B cell (primary cell): ENCODE measurements at regions of chr16 and their contacts with region 1.

Region 1: GRCh38 chr16:65671-66137 is 6.7 kb downstream of the RHBDF1 start:
- DNase-seq: peak; percentile 87
- ATAC-seq: peak; percentile 94
- H3K4me3 ChIP-seq: no peak overlapping the region
- H3K4me3 Mint-ChIP-seq: no peak overlapping the region
- H3K27ac ChIP-seq: no peak overlapping the region
- H3K27ac Mint-ChIP-seq: peak overlapping the region; percentile 56
- H3K4me1 ChIP-seq: peaks cover 0 to 8% of the 10 kb centered on the region in 2 donors
- H3K4me1 Mint-ChIP-seq: peaks cover 7% of the 10 kb centered on the region
- H3K27me3 ChIP-seq: peaks cover 0 to 15% (median 3%) of the 10 kb centered on the region in 4 experiments
- H3K27me3 Mint-ChIP-seq: peaks cover 6% of the 10 kb centered on the region
- CTCF ChIP-seq: peak; percentile 96

Region 2: GRCh38 chr16:53346-54236 is 12.1 kb before region 1 on chr16 and contains the starts of genes POLR3K and SNRNP25:
- CTCF ChIA-PET with region 1: interaction called, 24 read pairs
- POLR2A ChIA-PET with region 1: interaction called, 3 read pairs
- intact Hi-C with region 1: no loop called
- DNase-seq: peak; percentile 97
- ATAC-seq: peak; percentile 95
- H3K4me3 ChIP-seq: peak within 1 kb of the TSS; percentile 69 to 87 (median 82)
- H3K4me3 Mint-ChIP-seq: peak within 1 kb of the TSS; percentile 97
- H3K27ac ChIP-seq: peak within 1 kb of the TSS; percentile 52 to 82
- H3K27ac Mint-ChIP-seq: peak within 1 kb of the TSS; percentile 92
- H3K4me1 ChIP-seq: peaks cover 13 to 33% of the 10 kb centered on the region in 2 donors
- H3K4me1 Mint-ChIP-seq: peaks cover 31% of the 10 kb centered on the region
- H3K27me3 ChIP-seq: no peaks in the 10 kb centered on the region
- H3K27me3 Mint-ChIP-seq: no peaks in the 10 kb centered on the region
- CTCF ChIP-seq: no peak
- total RNA-seq, gene POLR3K: 28.3 and 34.9 TPM in 2 replicates
- total RNA-seq, gene SNRNP25: 24.3 and 25.5 TPM in 2 replicates

Region 3: DNA sequence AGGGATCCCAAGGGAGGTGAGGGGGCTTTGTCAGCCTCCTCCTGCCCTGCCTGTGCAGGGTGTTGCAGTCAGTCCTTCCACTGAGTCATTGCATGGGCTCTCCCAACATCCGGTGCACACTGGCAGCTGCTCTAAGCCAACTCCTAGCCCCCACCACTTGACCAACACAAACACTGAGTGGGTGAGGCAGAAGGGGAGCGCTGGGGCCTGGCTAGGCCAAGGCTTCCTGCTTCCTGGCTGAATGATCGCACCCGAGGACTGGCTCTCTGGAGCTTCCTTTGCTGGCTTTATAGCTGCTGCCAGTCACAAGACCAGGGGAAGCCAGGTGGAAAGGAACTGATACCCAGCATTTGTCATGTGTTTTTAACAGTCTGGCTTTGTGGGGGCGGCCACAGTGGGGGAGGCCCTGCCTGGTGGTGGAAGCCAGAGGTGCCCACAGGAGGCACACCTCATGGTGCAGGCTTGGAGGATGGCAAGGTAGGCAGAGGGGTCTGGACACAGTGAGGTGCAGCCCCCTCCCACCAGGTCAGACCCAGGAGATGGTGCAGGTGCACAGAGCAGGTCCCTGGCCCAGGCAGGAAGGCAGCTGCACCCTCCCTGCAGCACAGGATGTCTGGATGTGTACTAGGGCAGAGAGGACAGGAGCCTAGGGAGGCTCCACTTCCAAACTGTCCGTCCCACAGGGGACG is 19.2 kb after region 1 on chr16:
- CTCF ChIA-PET with region 1: interaction called, 20 read pairs
- POLR2A ChIA-PET with region 1: interaction called, 9 read pairs
- intact Hi-C with region 1: loop called (anchors 1 kb)
- DNase-seq: peak; percentile 87
- ATAC-seq: peak; percentile 80
- H3K4me3 ChIP-seq: no peak overlapping the region
- H3K4me3 Mint-ChIP-seq: peak overlapping the region; percentile 80
- H3K27ac ChIP-seq: peak overlapping the region; percentile 86 to 93
- H3K27ac Mint-ChIP-seq: peak overlapping the region; percentile 96
- H3K4me1 ChIP-seq: peaks cover 21 to 26% of the 10 kb centered on the region in 2 donors
- H3K4me1 Mint-ChIP-seq: peaks cover 26% of the 10 kb centered on the region
- H3K27me3 ChIP-seq: no peaks in the 10 kb centered on the region
- H3K27me3 Mint-ChIP-seq: no peaks in the 10 kb centered on the region
- CTCF ChIP-seq: no peak

Region 4: DNA sequence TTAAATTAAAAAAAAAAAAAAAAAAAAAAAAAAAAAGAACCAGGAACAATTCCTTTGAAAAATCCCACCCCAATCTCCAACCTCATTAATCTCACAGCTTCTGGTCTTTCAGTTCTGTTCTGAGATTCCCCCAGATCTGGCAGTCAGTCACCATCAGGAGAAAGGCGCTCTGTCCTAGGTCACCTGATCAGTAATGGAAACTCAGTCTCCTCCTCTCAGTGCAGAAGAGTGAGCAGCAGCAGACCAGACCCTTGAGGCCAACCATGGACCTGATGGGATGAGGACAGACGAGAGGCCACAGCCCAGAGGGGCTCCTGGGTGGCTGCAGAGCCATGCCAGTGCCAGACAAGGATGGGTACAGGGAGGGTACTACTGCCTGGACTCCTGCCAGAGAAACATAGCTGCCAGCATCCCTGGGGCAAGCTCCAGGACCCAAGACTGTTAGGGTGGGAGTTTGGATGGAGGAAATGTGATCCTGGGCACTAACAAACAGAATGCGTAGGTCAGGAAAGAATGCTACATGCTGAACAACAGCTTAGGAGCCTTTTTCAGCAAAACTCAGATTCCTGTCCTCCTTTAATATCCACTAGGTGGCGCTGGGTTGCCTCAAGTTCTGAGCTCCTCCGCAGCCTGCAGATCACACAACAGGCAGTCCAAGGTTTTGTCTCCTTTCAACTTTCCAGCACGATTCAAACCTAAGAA is 41.1 kb after region 1 on chr16:
- CTCF ChIA-PET with region 1: interaction called, 19 read pairs
- POLR2A ChIA-PET with region 1: interaction called, 4 read pairs
- intact Hi-C with region 1: no loop called
- DNase-seq: peak; percentile 78
- ATAC-seq: peak; percentile 74
- H3K4me3 ChIP-seq: no peak overlapping the region
- H3K4me3 Mint-ChIP-seq: no peak overlapping the region
- H3K27ac ChIP-seq: no peak overlapping the region
- H3K27ac Mint-ChIP-seq: no peak overlapping the region
- H3K4me1 ChIP-seq: peaks cover 0 to 3% of the 10 kb centered on the region in 2 donors
- H3K4me1 Mint-ChIP-seq: peaks cover 3% of the 10 kb centered on the region
- H3K27me3 ChIP-seq: no peaks in the 10 kb centered on the region
- H3K27me3 Mint-ChIP-seq: no peaks in the 10 kb centered on the region
- CTCF ChIP-seq: peak; percentile 82

Region 5: DNA sequence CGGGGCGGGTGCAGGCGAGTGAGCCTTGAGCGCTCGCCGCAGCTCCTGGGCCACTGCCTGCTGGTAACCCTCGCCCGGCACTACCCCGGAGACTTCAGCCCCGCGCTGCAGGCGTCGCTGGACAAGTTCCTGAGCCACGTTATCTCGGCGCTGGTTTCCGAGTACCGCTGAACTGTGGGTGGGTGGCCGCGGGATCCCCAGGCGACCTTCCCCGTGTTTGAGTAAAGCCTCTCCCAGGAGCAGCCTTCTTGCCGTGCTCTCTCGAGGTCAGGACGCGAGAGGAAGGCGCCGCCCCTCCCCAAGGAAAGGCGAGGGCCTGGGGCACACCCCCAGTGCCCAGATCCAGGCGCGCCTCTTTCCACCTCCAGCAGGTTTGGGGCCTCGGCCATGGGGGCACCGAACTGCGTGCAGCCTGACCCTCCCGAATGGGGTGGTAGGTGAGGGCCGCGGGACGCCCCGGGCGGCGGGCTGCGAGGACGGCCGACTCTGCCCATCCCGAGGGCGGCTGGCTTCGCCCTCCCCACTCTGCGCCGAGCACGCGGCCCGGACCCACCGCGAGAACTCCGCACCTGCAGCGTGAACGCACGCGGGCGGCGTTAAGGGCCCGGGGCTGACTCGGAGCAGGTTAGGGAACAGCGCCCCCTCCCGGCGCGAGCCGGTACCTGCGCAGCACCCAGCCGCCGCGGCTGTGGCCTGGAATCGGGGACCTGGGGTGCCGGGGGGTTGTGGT is 115.4 kb after region 1 on chr16:
- CTCF ChIA-PET with region 1: interaction called, 19 read pairs
- POLR2A ChIA-PET with region 1: interaction called, 4 read pairs
- intact Hi-C with region 1: loop called (anchors 1 kb)
- DNase-seq: peak; percentile 87
- ATAC-seq: peak; percentile 87
- H3K4me3 ChIP-seq: peak overlapping the region in 4 of 5 experiments; percentile 23 to 46 (median 38)
- H3K4me3 Mint-ChIP-seq: peak overlapping the region; percentile 45
- H3K27ac ChIP-seq: no peak overlapping the region
- H3K27ac Mint-ChIP-seq: no peak overlapping the region
- H3K4me1 ChIP-seq: peaks cover 14 to 22% of the 10 kb centered on the region in 2 donors
- H3K4me1 Mint-ChIP-seq: peaks cover 12% of the 10 kb centered on the region
- H3K27me3 ChIP-seq: peaks cover 0 to 38% (median 22%) of the 10 kb centered on the region in 4 experiments
- H3K27me3 Mint-ChIP-seq: peaks cover 19% of the 10 kb centered on the region
- CTCF ChIP-seq: peak; percentile 96

Region 6: GRCh38 chr16:700684-701584 is 635.2 kb after region 1 on chr16:
- CTCF ChIA-PET with region 1: no interaction called
- POLR2A ChIA-PET with region 1: no interaction called
- intact Hi-C with region 1: no loop called
- DNase-seq: peak; percentile 59
- ATAC-seq: no peak
- H3K4me3 ChIP-seq: no peak overlapping the region
- H3K4me3 Mint-ChIP-seq: no peak overlapping the region
- H3K27ac ChIP-seq: no peak overlapping the region
- H3K27ac Mint-ChIP-seq: no peak overlapping the region
- H3K4me1 ChIP-seq: peaks cover 18 to 20% of the 10 kb centered on the region in 2 donors
- H3K4me1 Mint-ChIP-seq: no peaks in the 10 kb centered on the region
- H3K27me3 ChIP-seq: peaks cover 0 to 72% (median 31%) of the 10 kb centered on the region in 4 experiments
- H3K27me3 Mint-ChIP-seq: peaks cover 26% of the 10 kb centered on the region
- CTCF ChIP-seq: no peak